HepG2 (cell line): ENCODE measurements at regions of chr4 and their contacts with region 1.

Region 1: GRCh38 chr4:42282081-42282901 is 115.0 kb upstream of the SHISA3 start:
- DNase-seq: peak; percentile 65
- ATAC-seq: peak; percentile 93
- H3K4me3 ChIP-seq: no peak overlapping the region
- H3K27ac ChIP-seq: no peak overlapping the region
- H3K4me1 ChIP-seq: 0 out of 2 replicates have a peak, but pooled peaks cover 5% of the 10 kb centered on the region
- H3K27me3 ChIP-seq: no peaks in the 10 kb centered on the region; a peak in 1 of 5 replicates
- CTCF ChIP-seq: peak; percentile 67
- EP300 ChIP-seq: no peak
- POLR2A ChIP-seq: no peak
- RAD21 ChIP-seq: peak; percentile 33; the same call in 1 of the 2 replicates

Region 2: DNA sequence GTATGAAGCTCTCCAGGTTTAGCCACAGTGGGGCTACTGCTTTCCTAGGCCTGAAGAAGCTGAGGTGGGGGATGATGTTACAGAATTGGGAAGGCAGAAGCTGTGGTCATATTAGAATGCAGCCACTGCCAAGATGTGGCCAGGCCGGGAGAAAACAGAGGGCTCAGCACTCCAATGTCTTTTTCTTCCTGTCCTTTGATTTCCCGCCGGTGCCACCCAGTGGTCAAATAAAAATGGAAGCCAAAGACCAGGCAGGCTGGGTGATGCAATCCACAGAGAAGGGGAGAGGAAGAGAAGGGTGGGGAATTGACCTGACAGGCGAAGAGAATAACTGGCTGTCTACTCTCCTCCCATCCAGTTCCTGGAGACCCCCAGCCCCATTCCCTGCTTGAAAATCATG is 20.1 kb after region 1 on chr4:
- CTCF ChIA-PET with region 1: no interaction called
- POLR2A ChIA-PET with region 1: no interaction called
- in situ Hi-C with region 1: no loop called
- intact Hi-C with region 1: loop called (anchors 2 kb)
- DNase-seq: peak; percentile 68
- ATAC-seq: peak; percentile 96
- H3K4me3 ChIP-seq: no peak overlapping the region
- H3K27ac ChIP-seq: no peak overlapping the region
- H3K4me1 ChIP-seq: no peaks in the 10 kb centered on the region
- H3K27me3 ChIP-seq: peaks cover 0 to 2% of the 10 kb centered on the region in 2 experiments; a peak in 1 of 5 replicates
- CTCF ChIP-seq: peak; percentile 67
- EP300 ChIP-seq: no peak
- POLR2A ChIP-seq: no peak
- RAD21 ChIP-seq: no peak